Activated CD4-positive, alpha-beta T cell treated with anti-CD3 and anti-CD28 coated beads for 36 hours (primary cell): ENCODE measurements at regions of chr17 and their contacts with region 1.

Region 1: GRCh38 chr17:77331301-77331864 is 190.6 kb downstream of the SEC14L1 start:
- DNase-seq: peak; percentile 98
- ATAC-seq: peak; percentile 89
- H3K4me3 Mint-ChIP-seq: peak overlapping the region; percentile 50
- H3K27ac Mint-ChIP-seq: peak overlapping the region; percentile 73
- H3K4me1 Mint-ChIP-seq: peaks cover 44% of the 10 kb centered on the region
- H3K27me3 Mint-ChIP-seq: no peaks in the 10 kb centered on the region

Region 2: GRCh38 chr17:77356109-77356689 is 24.8 kb after region 1 on chr17:
- CTCF ChIA-PET with region 1: interaction called, 8 read pairs
- POLR2A ChIA-PET with region 1: no interaction called
- intact Hi-C with region 1: loop called in 1 of 2 experiments (anchors 2 kb)
- DNase-seq: no peak
- ATAC-seq: peak; percentile 43
- H3K4me3 Mint-ChIP-seq: no peak overlapping the region
- H3K27ac Mint-ChIP-seq: no peak overlapping the region
- H3K4me1 Mint-ChIP-seq: peaks cover 13% of the 10 kb centered on the region
- H3K27me3 Mint-ChIP-seq: no peaks in the 10 kb centered on the region

Region 3: GRCh38 chr17:77404812-77405581 is 73.6 kb after region 1 on chr17:
- CTCF ChIA-PET with region 1: interaction called, 34 read pairs
- POLR2A ChIA-PET with region 1: no interaction called
- intact Hi-C with region 1: loop called (anchors 1 to 2 kb)
- DNase-seq: peak; percentile 93
- ATAC-seq: peak; percentile 79
- H3K4me3 Mint-ChIP-seq: peak overlapping the region; percentile 95
- H3K27ac Mint-ChIP-seq: peak overlapping the region; percentile 89
- H3K4me1 Mint-ChIP-seq: peaks cover 95% of the 10 kb centered on the region
- H3K27me3 Mint-ChIP-seq: no peaks in the 10 kb centered on the region

Region 4: DNA sequence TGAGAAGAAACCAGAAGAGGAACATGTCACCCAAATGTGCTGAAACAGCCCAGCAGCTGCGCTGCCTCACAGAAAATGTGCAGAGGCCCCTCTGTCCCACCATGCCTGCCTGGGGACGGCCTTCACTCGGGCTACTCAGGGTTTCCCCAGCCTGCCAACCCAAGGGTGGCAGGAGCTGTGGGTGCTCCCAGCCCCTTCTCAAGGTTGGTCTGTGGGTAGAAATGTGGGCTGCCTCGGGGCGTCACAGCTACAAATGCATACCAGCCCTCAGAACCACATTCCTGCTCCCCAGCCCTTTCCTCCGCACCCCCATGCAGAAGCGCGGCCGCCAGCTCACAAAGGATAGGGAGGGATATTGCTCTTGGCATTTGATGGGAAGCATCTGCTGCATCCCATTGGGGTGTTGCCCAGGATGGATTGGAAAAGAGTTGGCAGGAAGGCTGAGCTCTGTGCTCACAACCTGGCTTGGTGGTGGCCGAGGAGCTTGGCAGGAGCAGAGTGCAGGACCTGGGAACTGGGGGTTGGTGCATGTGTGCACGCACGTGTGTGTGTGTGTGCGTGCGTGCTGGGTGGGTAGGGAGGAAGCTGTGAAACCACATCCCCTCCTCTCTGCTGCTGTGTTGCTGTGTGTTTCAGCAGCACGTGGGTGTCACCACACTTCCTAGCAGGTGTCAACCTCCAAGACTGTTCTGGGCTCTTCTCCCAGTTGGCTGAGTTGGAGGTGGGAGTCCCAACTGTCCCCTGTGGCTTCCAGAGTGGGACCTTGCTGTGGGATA is 113.8 kb after region 1 on chr17:
- CTCF ChIA-PET with region 1: interaction called, 3 read pairs
- POLR2A ChIA-PET with region 1: no interaction called
- intact Hi-C with region 1: loop called in 1 of 2 experiments (anchors 2 kb)
- DNase-seq: peak; percentile 90
- ATAC-seq: peak; percentile 52
- H3K4me3 Mint-ChIP-seq: peak overlapping the region; percentile 62
- H3K27ac Mint-ChIP-seq: peak overlapping the region; percentile 95
- H3K4me1 Mint-ChIP-seq: peaks cover 97% of the 10 kb centered on the region
- H3K27me3 Mint-ChIP-seq: no peaks in the 10 kb centered on the region

Region 5: DNA sequence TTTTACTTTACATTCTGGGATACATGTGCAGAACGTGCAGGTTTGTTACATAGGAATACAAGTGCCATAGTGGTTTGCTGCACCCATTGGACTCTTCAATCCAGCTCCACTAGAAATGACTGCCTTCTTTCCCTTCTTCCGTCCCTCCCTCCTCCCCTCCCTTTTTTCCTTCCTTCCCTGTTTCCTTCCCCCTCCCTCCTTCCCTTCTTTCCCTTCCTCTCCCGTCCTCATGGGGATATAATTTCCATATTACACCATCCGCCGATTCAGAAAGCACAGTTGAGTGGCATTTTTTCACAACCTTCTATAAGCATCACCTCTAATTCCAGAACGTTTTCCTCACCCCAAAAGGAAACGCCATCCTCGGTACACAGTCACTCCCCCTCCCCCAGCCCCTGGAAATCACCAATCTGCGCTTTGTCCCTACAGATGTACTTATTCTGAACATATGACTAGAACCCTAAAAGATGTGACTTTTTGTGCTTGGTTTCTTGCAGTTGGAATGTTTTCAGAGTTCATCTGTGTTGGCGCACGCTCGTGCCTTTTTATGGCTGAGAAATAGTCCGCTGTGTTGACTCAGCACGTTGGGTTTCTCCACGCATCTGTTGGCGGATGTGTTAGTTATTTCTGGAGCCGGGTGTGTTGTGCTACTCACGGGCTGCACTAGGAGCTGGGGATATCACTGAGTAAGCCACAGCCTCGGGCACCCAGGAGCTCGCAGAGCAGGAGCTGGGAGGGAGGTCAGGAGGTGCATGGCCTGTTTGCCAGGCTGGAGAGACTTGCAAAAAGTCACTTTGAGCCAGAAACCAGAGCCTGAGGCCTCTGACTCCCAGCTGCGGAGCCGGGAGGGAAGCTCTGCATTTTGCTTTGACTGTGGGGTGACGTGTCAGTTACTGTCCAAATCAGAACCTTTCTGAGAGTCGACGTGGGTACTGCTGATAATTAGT is 145.8 kb after region 1 on chr17:
- CTCF ChIA-PET with region 1: interaction called, 9 read pairs
- POLR2A ChIA-PET with region 1: no interaction called
- intact Hi-C with region 1: loop called (anchors 1 to 5 kb)
- DNase-seq: peak; percentile 74
- ATAC-seq: peak; percentile 33
- H3K4me3 Mint-ChIP-seq: peak overlapping the region; percentile 24
- H3K27ac Mint-ChIP-seq: peak overlapping the region; percentile 80
- H3K4me1 Mint-ChIP-seq: peaks cover 78% of the 10 kb centered on the region
- H3K27me3 Mint-ChIP-seq: no peaks in the 10 kb centered on the region

Region 6: DNA sequence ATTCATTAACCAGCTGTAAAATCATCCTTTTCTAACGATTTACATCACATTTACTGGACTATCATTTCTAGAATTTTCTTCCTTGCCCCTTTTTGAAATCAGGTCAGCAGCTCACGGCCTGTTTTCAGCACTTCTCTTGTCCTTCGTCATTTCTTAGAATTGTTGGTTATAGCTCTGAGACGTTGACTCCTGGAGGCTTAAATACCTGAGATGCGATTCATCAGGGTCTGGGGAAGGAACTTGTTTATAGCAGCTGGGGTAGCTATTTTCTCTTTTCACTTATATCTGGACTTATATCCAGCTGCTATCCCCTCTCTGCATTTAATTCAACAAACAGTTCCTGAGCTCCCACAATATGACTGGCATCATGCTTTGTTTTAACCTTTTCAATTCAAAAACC is 288.5 kb after region 1 on chr17:
- CTCF ChIA-PET with region 1: no interaction called
- POLR2A ChIA-PET with region 1: no interaction called
- intact Hi-C with region 1: no loop called
- DNase-seq: no peak
- ATAC-seq: no peak
- H3K4me3 Mint-ChIP-seq: no peak overlapping the region
- H3K27ac Mint-ChIP-seq: no peak overlapping the region
- H3K4me1 Mint-ChIP-seq: peaks cover 11% of the 10 kb centered on the region
- H3K27me3 Mint-ChIP-seq: no peaks in the 10 kb centered on the region

Region 7: GRCh38 chr17:77645072-77646045 is 314.0 kb after region 1 on chr17:
- CTCF ChIA-PET with region 1: no interaction called
- POLR2A ChIA-PET with region 1: no interaction called
- intact Hi-C with region 1: loop called in 1 of 2 experiments (anchors 10 kb)
- DNase-seq: peak; percentile 81
- ATAC-seq: peak; percentile 85
- H3K4me3 Mint-ChIP-seq: peak overlapping the region; percentile 59
- H3K27ac Mint-ChIP-seq: peak overlapping the region; percentile 92
- H3K4me1 Mint-ChIP-seq: peaks cover 20% of the 10 kb centered on the region
- H3K27me3 Mint-ChIP-seq: peaks cover 4% of the 10 kb centered on the region

Region 8: GRCh38 chr17:77744066-77744988 is 412.9 kb after region 1 on chr17:
- CTCF ChIA-PET with region 1: no interaction called
- POLR2A ChIA-PET with region 1: no interaction called
- intact Hi-C with region 1: no loop called
- DNase-seq: no peak
- ATAC-seq: no peak
- H3K4me3 Mint-ChIP-seq: no peak overlapping the region
- H3K27ac Mint-ChIP-seq: no peak overlapping the region
- H3K4me1 Mint-ChIP-seq: peaks cover 3% of the 10 kb centered on the region
- H3K27me3 Mint-ChIP-seq: no peaks in the 10 kb centered on the region